CD8-positive, alpha-beta T cell (primary cell): ENCODE measurements at regions of chr20 and their contacts with region 1.

Region 1: DNA sequence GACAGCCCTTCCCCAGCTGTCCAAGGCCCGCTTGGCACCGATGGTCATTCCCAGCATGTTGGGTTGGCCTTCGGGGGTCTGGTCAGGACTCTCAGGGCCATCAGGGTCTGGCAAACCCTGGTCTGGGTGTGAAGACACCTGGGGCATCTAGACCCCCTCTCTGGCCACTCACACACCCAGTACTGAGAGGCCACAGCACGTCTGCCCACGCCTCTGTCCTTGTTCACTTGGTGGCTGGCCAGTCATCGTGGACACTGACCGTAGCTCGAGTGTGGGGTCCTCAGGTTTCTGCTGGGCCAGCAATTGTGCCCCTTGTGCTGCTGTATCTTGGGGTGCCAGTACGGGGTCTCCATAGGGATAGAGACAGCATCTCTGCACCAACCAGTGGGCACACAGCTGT is 53.9 kb upstream of the SULF2 start:
- DNase-seq: no peak
- ATAC-seq: no peak
- H3K4me3 ChIP-seq: no peak overlapping the region
- H3K4me3 Mint-ChIP-seq: no peak overlapping the region
- H3K27ac ChIP-seq: no peak overlapping the region
- H3K27ac Mint-ChIP-seq: no peak overlapping the region
- H3K4me1 ChIP-seq: no peaks in the 10 kb centered on the region
- H3K4me1 Mint-ChIP-seq: no peaks in the 10 kb centered on the region
- H3K27me3 ChIP-seq: no peaks in the 10 kb centered on the region
- H3K27me3 Mint-ChIP-seq: peaks cover 4% of the 10 kb centered on the region
- CTCF ChIP-seq: no peak

Region 2: GRCh38 chr20:47610247-47610944 is 228.8 kb before region 1 on chr20:
- CTCF ChIA-PET with region 1: no interaction called
- POLR2A ChIA-PET with region 1: no interaction called
- intact Hi-C with region 1: no loop called
- DNase-seq: peak in 8 of 9 experiments; percentile 47 to 79 (median 58)
- ATAC-seq: peak; percentile 89
- H3K4me3 ChIP-seq: no peak overlapping the region
- H3K4me3 Mint-ChIP-seq: no peak overlapping the region
- H3K27ac ChIP-seq: peak overlapping the region in 1 of 2 experiments; percentile 37
- H3K27ac Mint-ChIP-seq: peak overlapping the region; percentile 63
- H3K4me1 ChIP-seq: peaks cover 34% of the 10 kb centered on the region
- H3K4me1 Mint-ChIP-seq: peaks cover 72% of the 10 kb centered on the region
- H3K27me3 ChIP-seq: no peaks in the 10 kb centered on the region
- H3K27me3 Mint-ChIP-seq: no peaks in the 10 kb centered on the region
- CTCF ChIP-seq: no peak

Region 3: GRCh38 chr20:47886460-47887041 is 47.4 kb after region 1 on chr20:
- CTCF ChIA-PET with region 1: no interaction called
- POLR2A ChIA-PET with region 1: no interaction called
- intact Hi-C with region 1: loop called in 1 of 2 experiments (anchors 10 kb)
- DNase-seq: no peak
- ATAC-seq: no peak
- H3K4me3 ChIP-seq: no peak overlapping the region
- H3K4me3 Mint-ChIP-seq: no peak overlapping the region
- H3K27ac ChIP-seq: no peak overlapping the region
- H3K27ac Mint-ChIP-seq: no peak overlapping the region
- H3K4me1 ChIP-seq: no peaks in the 10 kb centered on the region
- H3K4me1 Mint-ChIP-seq: no peaks in the 10 kb centered on the region
- H3K27me3 ChIP-seq: no peaks in the 10 kb centered on the region
- H3K27me3 Mint-ChIP-seq: no peaks in the 10 kb centered on the region
- CTCF ChIP-seq: no peak

Region 4: DNA sequence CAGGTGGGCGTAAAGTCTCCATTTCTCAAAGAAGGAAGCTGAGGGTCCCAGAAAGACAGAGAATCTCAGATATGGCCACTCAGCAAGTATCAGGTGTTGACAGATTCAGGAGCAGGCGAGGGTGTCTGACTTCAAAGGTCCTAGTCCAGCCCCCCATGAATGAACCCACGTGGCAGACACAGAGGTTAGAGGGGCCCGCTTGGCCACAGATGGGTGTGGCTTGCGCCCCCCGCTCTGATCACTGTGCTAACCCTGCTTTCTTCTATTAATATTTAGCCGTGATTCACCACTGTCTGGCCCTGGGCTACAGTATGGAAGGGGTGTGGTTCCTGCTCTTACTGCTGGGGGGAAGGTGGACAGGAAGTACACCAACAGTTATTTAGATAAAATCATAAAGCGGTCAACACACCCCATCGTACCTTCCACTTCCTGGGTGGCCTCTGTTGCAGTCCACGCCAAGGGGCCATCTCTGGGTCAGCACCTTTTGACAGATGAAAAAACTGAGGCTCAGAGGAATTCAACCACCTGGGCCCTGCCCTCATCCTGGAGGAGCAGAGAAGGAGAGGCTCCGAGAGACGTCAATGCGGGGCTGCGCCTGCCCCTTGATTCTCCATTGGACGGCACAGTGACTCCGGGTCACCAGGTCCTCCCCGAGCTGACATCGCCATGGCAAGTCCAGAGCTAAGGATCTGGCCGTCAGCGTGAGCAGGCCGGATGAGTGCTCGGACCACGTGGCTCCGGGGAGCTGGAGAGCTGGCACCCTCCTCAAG is 782.2 kb after region 1 on chr20:
- CTCF ChIA-PET with region 1: no interaction called
- POLR2A ChIA-PET with region 1: no interaction called
- intact Hi-C with region 1: no loop called
- DNase-seq: peak in 2 of 9 experiments; percentile 37 to 40
- ATAC-seq: peak; percentile 19
- H3K4me3 ChIP-seq: no peak overlapping the region
- H3K4me3 Mint-ChIP-seq: no peak overlapping the region
- H3K27ac ChIP-seq: no peak overlapping the region
- H3K27ac Mint-ChIP-seq: peak overlapping the region; percentile 18
- H3K4me1 ChIP-seq: peaks cover 18% of the 10 kb centered on the region
- H3K4me1 Mint-ChIP-seq: peaks cover 14% of the 10 kb centered on the region
- H3K27me3 ChIP-seq: no peaks in the 10 kb centered on the region
- H3K27me3 Mint-ChIP-seq: no peaks in the 10 kb centered on the region
- CTCF ChIP-seq: peak; percentile 20